Activated naive CD4-positive, alpha-beta T cell treated with anti-CD3 and anti-CD28 coated beads for 36 hours (primary cell): ENCODE measurements at regions of chr1 and their contacts with region 1.

Region 1: DNA sequence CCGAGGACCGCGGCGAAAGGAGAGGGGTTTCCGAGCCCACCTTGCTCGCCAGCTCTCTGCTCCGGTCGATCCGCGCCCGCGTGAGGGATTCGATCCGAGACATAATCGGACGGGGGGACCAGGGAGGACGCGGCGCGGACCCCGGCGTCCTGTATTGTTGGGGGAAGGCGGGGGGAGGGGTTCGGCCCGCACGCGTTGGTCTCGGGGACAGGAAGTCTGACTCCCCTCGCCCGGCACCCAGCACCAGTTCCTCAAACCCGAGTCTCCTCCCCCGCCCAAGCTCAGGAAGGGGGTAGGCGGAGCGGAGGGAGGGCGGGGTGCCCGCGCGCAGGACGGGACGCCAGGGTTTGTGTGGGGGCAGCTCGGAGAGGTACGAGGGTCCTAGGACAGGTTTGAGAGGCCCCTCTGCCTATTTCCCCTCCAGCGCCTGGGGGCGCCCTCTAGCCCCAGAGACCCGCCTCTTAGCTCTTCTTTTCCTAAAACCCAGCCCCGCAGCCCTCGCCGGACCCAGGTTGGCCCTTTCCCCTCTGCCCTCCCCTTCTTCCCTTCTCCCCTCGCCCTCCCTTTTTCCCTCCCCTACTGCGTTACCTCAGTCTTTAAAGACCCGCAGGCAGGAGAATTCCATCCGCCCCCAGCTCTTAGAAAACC is at the start of gene ARHGEF2:
- DNase-seq: peak; percentile 87
- H3K4me3 Mint-ChIP-seq: peak within 1 kb of the TSS; percentile 98
- H3K27ac Mint-ChIP-seq: peak within 1 kb of the TSS; percentile 99
- H3K4me1 Mint-ChIP-seq: peaks cover 64% of the 10 kb centered on the region
- H3K27me3 Mint-ChIP-seq: no peaks in the 10 kb centered on the region
- total RNA-seq, gene ARHGEF2: 154 to 159 TPM

Region 2: GRCh38 chr1:155277070-155277895 is 701.2 kb before region 1 on chr1 and contains the start of gene HCN3:
- CTCF ChIA-PET with region 1: no interaction called
- intact Hi-C with region 1: loop called (anchors 10 kb)
- DNase-seq: peak; percentile 96
- H3K4me3 Mint-ChIP-seq: peak within 1 kb of the TSS; percentile 62
- H3K27ac Mint-ChIP-seq: no peak within 1 kb of the TSS
- H3K4me1 Mint-ChIP-seq: peaks cover 30% of the 10 kb centered on the region
- H3K27me3 Mint-ChIP-seq: no peaks in the 10 kb centered on the region
- total RNA-seq, gene HCN3: 0.79 to 1.6 TPM

Region 3: GRCh38 chr1:155744711-155745283 is 233.7 kb before region 1 on chr1:
- CTCF ChIA-PET with region 1: no interaction called
- intact Hi-C with region 1: loop called (anchors 2 kb)
- DNase-seq: no peak
- H3K4me3 Mint-ChIP-seq: peak overlapping the region; percentile 87
- H3K27ac Mint-ChIP-seq: peak overlapping the region; percentile 84
- H3K4me1 Mint-ChIP-seq: peaks cover 6% of the 10 kb centered on the region
- H3K27me3 Mint-ChIP-seq: no peaks in the 10 kb centered on the region

Region 4: GRCh38 chr1:155776404-155776803 is 202.0 kb before region 1 on chr1:
- CTCF ChIA-PET with region 1: no interaction called
- intact Hi-C with region 1: no loop called
- DNase-seq: peak; percentile 30
- H3K4me3 Mint-ChIP-seq: no peak overlapping the region
- H3K27ac Mint-ChIP-seq: peak overlapping the region; percentile 50
- H3K4me1 Mint-ChIP-seq: peaks cover 12% of the 10 kb centered on the region
- H3K27me3 Mint-ChIP-seq: no peaks in the 10 kb centered on the region

Region 5: GRCh38 chr1:155946633-155947219 is 31.7 kb before region 1 on chr1:
- CTCF ChIA-PET with region 1: interaction called, 7 read pairs
- intact Hi-C with region 1: loop called (anchors 1 kb)
- DNase-seq: no peak
- H3K4me3 Mint-ChIP-seq: no peak overlapping the region
- H3K27ac Mint-ChIP-seq: peak overlapping the region; percentile 99
- H3K4me1 Mint-ChIP-seq: peaks cover 56% of the 10 kb centered on the region
- H3K27me3 Mint-ChIP-seq: no peaks in the 10 kb centered on the region

Region 6: GRCh38 chr1:155989242-155990004 is 11.0 kb after region 1 on chr1:
- CTCF ChIA-PET with region 1: interaction called, 14 read pairs
- intact Hi-C with region 1: no loop called
- DNase-seq: peak; percentile 87
- H3K4me3 Mint-ChIP-seq: no peak overlapping the region
- H3K27ac Mint-ChIP-seq: no peak overlapping the region
- H3K4me1 Mint-ChIP-seq: peaks cover 4% of the 10 kb centered on the region
- H3K27me3 Mint-ChIP-seq: no peaks in the 10 kb centered on the region